CD4-positive, alpha-beta T cell (primary cell): ENCODE measurements at regions of chr18 and their contacts with region 1.

Region 1: DNA sequence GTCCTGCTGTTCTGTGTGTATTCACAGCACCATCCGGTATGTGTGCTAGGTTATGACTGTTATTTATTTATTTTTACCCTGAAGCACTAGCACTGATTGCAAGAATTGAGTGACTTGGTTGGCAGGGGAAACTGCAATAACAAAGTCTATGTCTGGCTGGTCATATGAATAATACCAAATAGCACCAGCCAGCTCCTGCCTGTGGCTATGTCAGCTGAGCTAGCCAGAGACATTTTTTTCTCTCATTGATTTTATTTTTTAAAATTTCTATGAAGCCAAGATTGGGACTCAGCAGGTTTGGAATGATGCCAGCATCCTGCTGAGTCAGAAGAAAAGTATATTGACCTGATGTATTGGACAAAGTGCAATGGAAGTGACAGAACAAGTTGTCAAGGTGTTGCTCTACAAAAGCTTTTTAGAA is 188.5 kb upstream of the CDH2 start:
- DNase-seq: no peak
- ATAC-seq: no peak
- H3K4me3 ChIP-seq: no peak overlapping the region
- H3K4me3 Mint-ChIP-seq: no peak overlapping the region
- H3K27ac ChIP-seq: no peak overlapping the region
- H3K27ac Mint-ChIP-seq: no peak overlapping the region
- H3K4me1 ChIP-seq: no peaks in the 10 kb centered on the region
- H3K4me1 Mint-ChIP-seq: no peaks in the 10 kb centered on the region
- H3K27me3 ChIP-seq: no peaks in the 10 kb centered on the region
- H3K27me3 Mint-ChIP-seq: no peaks in the 10 kb centered on the region
- CTCF ChIP-seq: no peak

Region 2: GRCh38 chr18:28350821-28351220 is 14.6 kb before region 1 on chr18:
- CTCF ChIA-PET with region 1: no interaction called
- POLR2A ChIA-PET with region 1: no interaction called
- intact Hi-C with region 1: no loop called
- DNase-seq: no peak
- ATAC-seq: no peak
- H3K4me3 ChIP-seq: no peak overlapping the region
- H3K4me3 Mint-ChIP-seq: no peak overlapping the region
- H3K27ac ChIP-seq: no peak overlapping the region
- H3K27ac Mint-ChIP-seq: no peak overlapping the region
- H3K4me1 ChIP-seq: no peaks in the 10 kb centered on the region
- H3K4me1 Mint-ChIP-seq: no peaks in the 10 kb centered on the region
- H3K27me3 ChIP-seq: no peaks in the 10 kb centered on the region
- H3K27me3 Mint-ChIP-seq: no peaks in the 10 kb centered on the region
- CTCF ChIP-seq: no peak

Region 3: GRCh38 chr18:28422577-28422976 is 57.2 kb after region 1 on chr18:
- CTCF ChIA-PET with region 1: no interaction called
- POLR2A ChIA-PET with region 1: no interaction called
- intact Hi-C with region 1: loop called in 1 of 2 experiments (anchors 10 kb)
- DNase-seq: no peak
- ATAC-seq: no peak
- H3K4me3 ChIP-seq: no peak overlapping the region
- H3K4me3 Mint-ChIP-seq: no peak overlapping the region
- H3K27ac ChIP-seq: no peak overlapping the region
- H3K27ac Mint-ChIP-seq: no peak overlapping the region
- H3K4me1 ChIP-seq: no peaks in the 10 kb centered on the region
- H3K4me1 Mint-ChIP-seq: no peaks in the 10 kb centered on the region
- H3K27me3 ChIP-seq: no peaks in the 10 kb centered on the region
- H3K27me3 Mint-ChIP-seq: no peaks in the 10 kb centered on the region
- CTCF ChIP-seq: no peak